ENCODE measurements at regions of chr21 and their contacts with region 1.

Region 1: GRCh38 chr21:38645282-38645681 is 147.0 kb upstream of the ERG start:
- DNase-seq: no peak
- H3K4me3 Mint-ChIP-seq: no peak overlapping the region
- H3K27ac Mint-ChIP-seq: peak overlapping the region; percentile 81
- H3K4me1 Mint-ChIP-seq: peaks cover 22% of the 10 kb centered on the region
- H3K27me3 Mint-ChIP-seq: peaks cover 5% of the 10 kb centered on the region

Region 2: GRCh38 chr21:38478782-38479181 is 166.5 kb before region 1 on chr21:
- intact Hi-C with region 1: loop called (anchors 5 kb)
- DNase-seq: peak; percentile 39
- H3K4me3 Mint-ChIP-seq: no peak overlapping the region
- H3K27ac Mint-ChIP-seq: no peak overlapping the region
- H3K4me1 Mint-ChIP-seq: peaks cover 31% of the 10 kb centered on the region
- H3K27me3 Mint-ChIP-seq: peaks cover 70% of the 10 kb centered on the region

Region 3: GRCh38 chr21:38520511-38520910 is 124.8 kb before region 1 on chr21:
- intact Hi-C with region 1: loop called (anchors 5 kb)
- DNase-seq: peak; percentile 14
- H3K4me3 Mint-ChIP-seq: no peak overlapping the region
- H3K27ac Mint-ChIP-seq: peak overlapping the region; percentile 7
- H3K4me1 Mint-ChIP-seq: peaks cover 26% of the 10 kb centered on the region
- H3K27me3 Mint-ChIP-seq: peaks cover 57% of the 10 kb centered on the region

Region 4: GRCh38 chr21:38596264-38597042 is 48.8 kb before region 1 on chr21:
- intact Hi-C with region 1: loop called (anchors 2 kb)
- DNase-seq: no peak
- H3K4me3 Mint-ChIP-seq: no peak overlapping the region
- H3K27ac Mint-ChIP-seq: peak overlapping the region; percentile 48
- H3K4me1 Mint-ChIP-seq: peaks cover 17% of the 10 kb centered on the region
- H3K27me3 Mint-ChIP-seq: peaks cover 18% of the 10 kb centered on the region

Measured in activated T-helper 2 cell treated with anti-CD3 and anti-CD28 coated beads, Interferon-gamma antibody, Interleukin-2, Interleukin-4, amounts not matched to agents 10 μg/mL and 5 μg/mL and 100 μg/mL, durations not matched to agents 14 hours and 24 hours and 36 hours (primary cell).